Breast epithelium (tissue), 4 donors: ENCODE measurements at regions of chr20 and their contacts with region 1.

Region 1: GRCh38 chr20:16801919-16802911 is 54.1 kb downstream of the OTOR start:
- DNase-seq: peak in 1 of 2 donors; percentile 64
- H3K4me3 ChIP-seq: no peak overlapping the region
- H3K27ac ChIP-seq: no peak overlapping the region
- H3K4me1 ChIP-seq: no peaks in the 10 kb centered on the region
- H3K27me3 ChIP-seq: peaks cover 0 to 58% of the 10 kb centered on the region in 2 donors
- CTCF ChIP-seq: peak in 2 of 3 donors; percentile 59 to 62
- POLR2A ChIP-seq: no peak

Region 2: DNA sequence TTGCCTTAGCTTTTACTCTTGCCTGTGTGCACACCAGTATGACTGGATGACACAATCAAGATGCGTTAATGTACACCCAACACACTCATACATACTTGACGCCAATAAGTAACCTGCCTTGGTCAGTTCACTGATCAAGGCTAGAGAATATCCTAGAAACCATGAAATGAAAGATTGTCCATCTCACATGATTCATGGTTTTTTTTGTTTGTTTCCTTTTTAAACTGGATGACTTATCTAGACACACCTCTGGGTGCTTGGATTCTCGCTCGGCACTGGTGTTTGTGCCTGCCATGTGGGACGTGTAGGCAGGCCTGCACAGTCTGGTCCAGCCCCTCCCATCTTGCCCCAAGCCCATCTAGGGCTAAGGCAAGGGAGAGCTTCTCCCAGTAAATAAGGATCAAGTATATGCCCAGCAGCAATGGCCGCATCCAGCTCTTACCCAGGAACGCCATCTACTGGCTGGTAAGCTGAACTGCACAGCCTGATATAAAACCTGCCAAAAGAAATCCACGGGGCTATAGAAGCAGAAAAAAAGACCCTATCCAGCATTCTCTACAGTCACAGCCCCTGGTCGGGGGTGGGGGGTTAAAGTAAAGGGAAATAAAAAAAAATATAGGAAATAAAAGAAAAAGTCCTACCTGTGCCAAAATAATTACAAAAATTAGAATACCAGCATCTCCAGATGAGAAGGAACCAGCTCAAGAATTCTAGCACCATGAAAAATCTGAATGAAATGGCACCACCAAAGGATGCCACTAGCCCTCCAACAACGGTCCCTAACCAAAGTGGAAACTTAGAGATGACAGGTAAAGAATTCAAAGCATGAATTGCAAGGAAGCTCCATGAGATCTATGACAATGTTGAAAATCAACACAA is 19.2 kb after region 1 on chr20:
- intact Hi-C with region 1: no loop called
- DNase-seq: no peak
- H3K4me3 ChIP-seq: no peak overlapping the region
- H3K27ac ChIP-seq: no peak overlapping the region
- H3K4me1 ChIP-seq: no peaks in the 10 kb centered on the region
- H3K27me3 ChIP-seq: no peaks in the 10 kb centered on the region
- CTCF ChIP-seq: peak; percentile 25 to 49 (median 28)
- POLR2A ChIP-seq: no peak

Region 3: DNA sequence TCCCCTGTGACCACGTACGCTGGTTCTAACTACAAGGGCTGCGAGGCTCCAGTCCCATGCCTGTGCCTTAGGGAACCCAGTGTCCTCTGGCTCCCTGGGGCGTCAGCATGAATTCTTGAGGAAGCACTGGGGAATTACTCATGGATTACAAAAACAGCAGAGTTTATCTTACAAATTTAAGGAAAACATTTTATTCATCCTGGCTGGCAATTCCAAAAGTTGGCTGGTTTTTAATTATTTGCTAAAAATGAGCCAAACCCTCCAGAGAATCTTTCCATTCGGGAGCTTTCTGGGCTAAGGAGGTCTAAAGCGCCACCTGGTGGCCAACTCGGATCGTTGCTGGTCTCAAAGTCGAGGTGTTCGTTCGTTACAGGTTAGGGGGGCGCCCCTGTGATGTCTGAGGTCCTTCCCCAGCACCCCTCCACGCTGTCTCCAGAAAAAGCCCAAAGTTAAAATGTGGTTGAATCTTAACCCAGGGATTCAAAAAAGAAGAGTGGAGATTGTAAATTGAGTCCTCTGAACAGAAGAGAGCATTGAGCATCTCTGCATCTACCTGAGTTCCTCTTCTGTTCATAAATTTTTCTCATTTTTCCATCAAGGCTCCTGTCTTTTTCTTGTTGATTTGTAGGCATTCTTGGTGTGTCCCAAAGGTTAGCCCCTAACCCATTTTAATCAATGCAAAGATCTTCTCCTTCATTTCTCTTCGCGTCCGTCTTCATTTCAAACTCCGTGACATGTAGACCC is 629.6 kb after region 1 on chr20:
- intact Hi-C with region 1: loop called (anchors 10 kb)
- DNase-seq: no peak
- H3K4me3 ChIP-seq: no peak overlapping the region
- H3K27ac ChIP-seq: no peak overlapping the region
- H3K4me1 ChIP-seq: no peaks in the 10 kb centered on the region
- H3K27me3 ChIP-seq: peaks cover 0 to 17% of the 10 kb centered on the region in 2 donors
- CTCF ChIP-seq: peak; percentile 25 to 81 (median 65)
- POLR2A ChIP-seq: no peak